Activated CD4-positive, alpha-beta T cell treated with anti-CD3 and anti-CD28 coated beads for 36 hours (primary cell): ENCODE measurements at regions of chr22 and their contacts with region 1.

Region 1: DNA sequence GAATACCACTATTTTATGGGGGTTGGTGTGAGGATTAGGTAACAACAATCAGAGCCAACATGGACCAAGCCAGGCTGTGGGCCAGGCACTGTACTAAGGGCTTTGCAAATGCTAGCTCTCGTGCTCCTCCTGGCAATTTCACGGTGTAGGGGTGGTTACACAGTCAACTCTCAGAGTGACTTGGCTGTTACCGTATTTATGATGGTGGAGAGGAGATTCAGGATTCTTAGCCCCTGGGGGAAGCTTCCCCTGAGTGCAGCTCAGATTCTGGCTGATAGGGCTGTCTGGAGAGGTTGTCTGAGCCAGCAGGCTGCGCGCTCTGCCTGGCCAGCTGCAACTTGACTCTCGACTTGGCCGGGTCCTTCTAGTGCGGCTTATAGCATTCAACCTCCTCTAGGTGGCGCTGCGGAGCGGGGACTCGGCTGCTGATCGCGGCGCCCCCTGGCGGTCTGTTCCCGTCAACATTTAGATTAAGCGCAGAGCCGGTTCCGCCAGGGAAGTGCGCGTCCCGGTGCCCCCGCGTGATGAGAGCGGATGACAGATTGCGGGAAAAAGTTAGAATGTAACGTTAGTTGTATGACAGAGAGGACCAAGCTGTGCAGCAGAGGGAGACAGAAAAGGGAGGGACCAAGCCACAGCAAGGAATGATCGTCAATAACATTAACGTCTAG is 4.5 kb upstream of the NCF4 start:
- DNase-seq: peak; percentile 97
- ATAC-seq: peak; percentile 58
- H3K4me3 Mint-ChIP-seq: no peak overlapping the region
- H3K27ac Mint-ChIP-seq: no peak overlapping the region
- H3K4me1 Mint-ChIP-seq: peaks cover 28% of the 10 kb centered on the region
- H3K27me3 Mint-ChIP-seq: peaks cover 2% of the 10 kb centered on the region

Region 2: DNA sequence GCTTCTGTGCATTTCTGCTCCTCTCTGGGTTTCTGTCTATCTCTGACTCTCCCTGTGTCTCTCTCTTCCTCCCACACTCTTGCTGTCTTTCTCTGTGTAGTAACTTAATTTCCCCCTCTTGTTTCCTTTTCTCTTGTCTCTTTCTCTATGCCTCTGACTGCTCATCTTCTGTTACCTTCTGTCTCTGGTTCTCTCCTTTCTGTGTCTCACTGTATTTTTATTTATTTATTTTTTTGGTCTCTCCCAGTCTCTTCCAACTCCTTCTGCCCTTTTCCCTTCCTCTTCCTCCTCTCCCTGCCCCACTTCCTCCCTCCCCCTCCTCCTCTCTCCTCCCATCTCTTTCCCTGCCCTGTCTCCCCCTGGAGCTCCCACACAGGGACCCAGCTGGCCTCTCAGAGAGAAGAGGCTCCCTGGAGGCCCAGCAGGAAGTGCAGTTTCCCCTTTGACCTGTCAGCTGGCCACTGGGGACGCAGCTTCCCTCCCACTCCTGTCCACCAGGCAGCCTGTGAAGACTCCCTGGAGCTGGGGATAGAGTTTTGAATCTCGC is 430.2 kb before region 1 on chr22:
- CTCF ChIA-PET with region 1: no interaction called
- POLR2A ChIA-PET with region 1: no interaction called
- intact Hi-C with region 1: no loop called
- DNase-seq: peak; percentile 26
- ATAC-seq: peak; percentile 82
- H3K4me3 Mint-ChIP-seq: no peak overlapping the region
- H3K27ac Mint-ChIP-seq: peak overlapping the region; percentile 87
- H3K4me1 Mint-ChIP-seq: peaks cover 26% of the 10 kb centered on the region
- H3K27me3 Mint-ChIP-seq: no peaks in the 10 kb centered on the region

Region 3: DNA sequence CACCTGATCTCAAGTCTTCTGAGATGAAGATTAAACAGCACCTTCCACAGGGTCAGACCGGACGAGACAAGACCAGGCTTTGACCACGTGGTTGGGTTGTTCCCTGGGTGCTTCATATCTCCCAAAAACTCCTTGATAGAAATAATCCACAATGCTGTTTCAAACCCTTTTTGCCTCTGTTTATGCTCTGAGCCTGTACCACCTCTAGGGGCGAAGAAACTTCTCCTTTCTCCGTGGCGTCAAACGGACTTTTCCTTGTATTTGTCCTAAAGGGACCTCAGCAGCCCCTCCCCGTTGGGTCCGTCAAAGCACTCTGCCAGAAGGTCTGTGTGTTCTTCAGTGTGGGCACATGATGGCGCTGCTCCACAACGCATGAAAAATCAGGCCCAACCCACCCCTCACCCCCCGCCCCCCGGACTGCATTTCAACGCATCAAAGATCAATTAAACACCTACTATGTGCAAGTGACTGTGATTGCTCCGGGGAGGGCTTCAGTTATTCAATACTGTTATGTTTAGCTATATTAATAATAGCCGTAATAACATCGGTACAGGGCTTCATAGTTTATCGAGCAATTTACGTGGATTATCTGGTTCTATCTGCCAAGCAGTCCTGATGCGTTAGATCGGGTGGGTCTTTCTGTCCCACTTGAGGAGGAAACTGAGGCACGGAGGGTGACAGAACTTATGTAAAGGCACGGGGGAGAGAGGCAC is 310.0 kb before region 1 on chr22:
- CTCF ChIA-PET with region 1: no interaction called
- POLR2A ChIA-PET with region 1: no interaction called
- intact Hi-C with region 1: loop called (anchors 1 kb)
- DNase-seq: peak; percentile 72
- ATAC-seq: peak; percentile 59
- H3K4me3 Mint-ChIP-seq: no peak overlapping the region
- H3K27ac Mint-ChIP-seq: no peak overlapping the region
- H3K4me1 Mint-ChIP-seq: peaks cover 8% of the 10 kb centered on the region
- H3K27me3 Mint-ChIP-seq: peaks cover 8% of the 10 kb centered on the region

Region 4: GRCh38 chr22:36781656-36782627 is 74.3 kb before region 1 on chr22:
- CTCF ChIA-PET with region 1: interaction called, 39 read pairs
- POLR2A ChIA-PET with region 1: no interaction called
- intact Hi-C with region 1: loop called (anchors 1 kb)
- DNase-seq: peak; percentile 94
- ATAC-seq: peak; percentile 99
- H3K4me3 Mint-ChIP-seq: peak overlapping the region; percentile 24
- H3K27ac Mint-ChIP-seq: peak overlapping the region; percentile 59
- H3K4me1 Mint-ChIP-seq: peaks cover 24% of the 10 kb centered on the region
- H3K27me3 Mint-ChIP-seq: no peaks in the 10 kb centered on the region

Region 5: GRCh38 chr22:36787204-36787988 is 68.9 kb before region 1 on chr22:
- CTCF ChIA-PET with region 1: interaction called, 29 read pairs
- POLR2A ChIA-PET with region 1: no interaction called
- intact Hi-C with region 1: loop called (anchors 1 kb)
- DNase-seq: no peak
- ATAC-seq: no peak
- H3K4me3 Mint-ChIP-seq: no peak overlapping the region
- H3K27ac Mint-ChIP-seq: no peak overlapping the region
- H3K4me1 Mint-ChIP-seq: peaks cover 11% of the 10 kb centered on the region
- H3K27me3 Mint-ChIP-seq: no peaks in the 10 kb centered on the region

Region 6: DNA sequence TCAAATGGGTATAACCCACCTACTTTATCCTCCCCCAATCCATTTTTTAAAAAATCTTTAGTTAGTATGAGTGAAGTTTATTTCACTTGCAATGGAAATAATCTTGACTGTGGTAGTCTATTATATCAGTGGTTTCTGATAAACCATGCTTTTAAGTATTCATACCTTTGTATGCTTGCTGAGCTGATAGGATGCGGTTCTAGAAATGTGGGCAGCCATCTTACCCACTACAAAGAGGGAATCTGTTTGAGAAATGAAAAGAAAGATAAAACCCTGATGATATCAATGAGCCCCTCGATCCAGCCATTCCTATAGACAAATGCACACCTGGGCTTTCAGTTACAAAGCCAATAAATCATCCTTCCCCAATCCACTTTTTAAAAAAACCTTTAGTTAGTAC is 25.7 kb before region 1 on chr22:
- CTCF ChIA-PET with region 1: interaction called, 10 read pairs
- POLR2A ChIA-PET with region 1: no interaction called
- intact Hi-C with region 1: no loop called
- DNase-seq: no peak
- ATAC-seq: no peak
- H3K4me3 Mint-ChIP-seq: no peak overlapping the region
- H3K27ac Mint-ChIP-seq: no peak overlapping the region
- H3K4me1 Mint-ChIP-seq: peaks cover 16% of the 10 kb centered on the region
- H3K27me3 Mint-ChIP-seq: peaks cover 32% of the 10 kb centered on the region

Region 7: GRCh38 chr22:36884349-36885117 is 28.3 kb after region 1 on chr22:
- CTCF ChIA-PET with region 1: interaction called, 17 read pairs
- POLR2A ChIA-PET with region 1: no interaction called
- intact Hi-C with region 1: loop called in 1 of 2 experiments (anchors 1 kb)
- DNase-seq: no peak
- ATAC-seq: peak; percentile 77
- H3K4me3 Mint-ChIP-seq: no peak overlapping the region
- H3K27ac Mint-ChIP-seq: no peak overlapping the region
- H3K4me1 Mint-ChIP-seq: peaks cover 40% of the 10 kb centered on the region
- H3K27me3 Mint-ChIP-seq: peaks cover 4% of the 10 kb centered on the region

Region 8: DNA sequence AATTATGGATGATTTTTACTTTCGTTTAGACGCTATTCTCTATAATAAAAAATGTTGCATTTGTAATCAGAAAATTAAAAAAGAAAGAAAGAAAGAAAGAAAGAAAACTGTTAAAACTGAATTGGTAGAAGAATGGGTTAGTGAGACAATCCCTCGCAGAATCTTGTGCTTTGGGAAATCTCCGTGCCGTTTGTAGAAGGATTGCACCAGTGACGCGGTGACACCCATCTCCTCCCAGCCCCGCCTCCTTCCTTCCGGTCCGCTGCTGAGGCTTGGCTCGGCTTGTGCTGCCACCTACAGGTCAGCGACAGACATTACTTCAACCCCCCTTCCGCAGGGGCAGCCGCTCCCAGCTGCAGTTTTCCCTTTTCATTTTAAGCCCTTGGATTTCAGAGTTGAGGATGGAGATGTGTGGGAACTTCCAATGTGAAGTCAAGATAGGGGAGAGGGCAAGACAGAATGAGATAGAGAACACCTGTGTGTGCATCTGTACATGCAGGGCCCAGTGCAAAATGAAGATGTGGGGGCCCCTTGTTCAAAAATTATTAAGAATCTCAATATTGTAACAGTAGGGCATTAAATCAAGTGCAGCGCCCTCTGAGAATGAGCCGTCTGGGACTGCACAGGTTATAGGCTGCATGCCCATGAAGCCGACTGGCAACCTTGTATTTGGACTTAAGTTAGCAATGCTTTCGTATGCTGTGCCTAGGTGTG is 121.8 kb after region 1 on chr22:
- CTCF ChIA-PET with region 1: interaction called, 60 read pairs
- POLR2A ChIA-PET with region 1: no interaction called
- intact Hi-C with region 1: loop called (anchors 1 kb)
- DNase-seq: peak; percentile 95
- ATAC-seq: peak; percentile 86
- H3K4me3 Mint-ChIP-seq: peak overlapping the region; percentile 76
- H3K27ac Mint-ChIP-seq: peak overlapping the region; percentile 77
- H3K4me1 Mint-ChIP-seq: peaks cover 8% of the 10 kb centered on the region
- H3K27me3 Mint-ChIP-seq: no peaks in the 10 kb centered on the region